ENCODE measurements at regions of chr1 and their contacts with region 1.

Region 1: GRCh38 chr1:236389261-236389660 is 4.8 kb upstream of the EDARADD start:
- DNase-seq: peak in 1 of 2 experiments; percentile 73
- ATAC-seq: peak; percentile 54 to 89; a peak in 5 of 6 replicates
- H3K4me3 ChIP-seq: no peak overlapping the region
- H3K27ac ChIP-seq: peak overlapping the region; percentile 52 to 67; a peak in 4 of 6 replicates
- H3K4me1 ChIP-seq: peaks cover 35% of the 10 kb centered on the region
- CTCF ChIP-seq: no peak
- EP300 ChIP-seq: no peak
- POLR2A ChIP-seq: no peak
- RAD21 ChIP-seq: no peak

Region 2: GRCh38 chr1:236354330-236355147 is 34.7 kb before region 1 on chr1:
- CTCF ChIA-PET with region 1: no interaction called
- POLR2A ChIA-PET with region 1: no interaction called
- DNase-seq: no peak
- ATAC-seq: no peak
- H3K4me3 ChIP-seq: no peak overlapping the region
- H3K27ac ChIP-seq: no peak overlapping the region
- H3K4me1 ChIP-seq: no peaks in the 10 kb centered on the region
- CTCF ChIP-seq: no peak
- EP300 ChIP-seq: no peak
- POLR2A ChIP-seq: no peak
- RAD21 ChIP-seq: no peak

Region 3: GRCh38 chr1:236400061-236400603 is 10.9 kb after region 1 on chr1:
- CTCF ChIA-PET with region 1: no interaction called
- POLR2A ChIA-PET with region 1: no interaction called
- DNase-seq: no peak
- ATAC-seq: peak; percentile 41 to 43; a peak in 5 of 6 replicates
- H3K4me3 ChIP-seq: no peak overlapping the region
- H3K27ac ChIP-seq: peak overlapping the region; percentile 62 to 72
- H3K4me1 ChIP-seq: peaks cover 52% of the 10 kb centered on the region
- CTCF ChIP-seq: no peak
- EP300 ChIP-seq: no peak
- POLR2A ChIP-seq: no peak
- RAD21 ChIP-seq: no peak

Region 4: GRCh38 chr1:236502885-236503639 is 113.8 kb after region 1 on chr1:
- CTCF ChIA-PET with region 1: no interaction called
- POLR2A ChIA-PET with region 1: interaction called, 10 read pairs
- DNase-seq: peak; percentile 60 to 86
- ATAC-seq: peak; percentile 92 to 93
- H3K4me3 ChIP-seq: peak overlapping the region; percentile 27
- H3K27ac ChIP-seq: peak overlapping the region; percentile 76 to 83
- H3K4me1 ChIP-seq: peaks cover 17% of the 10 kb centered on the region
- CTCF ChIP-seq: no peak
- EP300 ChIP-seq: peak; percentile 19 to 24; a peak in 1 of 5 replicates
- POLR2A ChIP-seq: no peak
- RAD21 ChIP-seq: no peak